Calu3 (cell line): ENCODE measurements at regions of chr7 and their contacts with region 1.

Region 1: GRCh38 chr7:38796626-38797501 is 112.1 kb downstream of the VPS41 start:
- DNase-seq: peak; percentile 79
- H3K4me3 Mint-ChIP-seq: no peak overlapping the region
- H3K27ac Mint-ChIP-seq: peak overlapping the region; percentile 25
- H3K4me1 Mint-ChIP-seq: peaks cover 30% of the 10 kb centered on the region
- H3K27me3 Mint-ChIP-seq: no peaks in the 10 kb centered on the region
- CTCF ChIP-seq: peak; percentile 83

Region 2: GRCh38 chr7:37942934-37943610 is 853.8 kb before region 1 on chr7:
- CTCF ChIA-PET with region 1: no interaction called
- intact Hi-C with region 1: no loop called
- DNase-seq: peak; percentile 67
- H3K4me3 Mint-ChIP-seq: peak overlapping the region; percentile 40
- H3K27ac Mint-ChIP-seq: peak overlapping the region; percentile 79
- H3K4me1 Mint-ChIP-seq: peaks cover 46% of the 10 kb centered on the region
- H3K27me3 Mint-ChIP-seq: no peaks in the 10 kb centered on the region
- CTCF ChIP-seq: no peak

Region 3: GRCh38 chr7:38007096-38007495 is 789.8 kb before region 1 on chr7:
- CTCF ChIA-PET with region 1: no interaction called
- intact Hi-C with region 1: no loop called
- DNase-seq: no peak
- H3K4me3 Mint-ChIP-seq: no peak overlapping the region
- H3K27ac Mint-ChIP-seq: no peak overlapping the region
- H3K4me1 Mint-ChIP-seq: no peaks in the 10 kb centered on the region
- H3K27me3 Mint-ChIP-seq: no peaks in the 10 kb centered on the region
- CTCF ChIP-seq: no peak

Region 4: GRCh38 chr7:38831259-38831996 is 34.6 kb after region 1 on chr7:
- CTCF ChIA-PET with region 1: no interaction called
- intact Hi-C with region 1: loop called (anchors 1 kb)
- DNase-seq: peak; percentile 15
- H3K4me3 Mint-ChIP-seq: peak overlapping the region; percentile 39
- H3K27ac Mint-ChIP-seq: peak overlapping the region; percentile 63
- H3K4me1 Mint-ChIP-seq: peaks cover 73% of the 10 kb centered on the region
- H3K27me3 Mint-ChIP-seq: no peaks in the 10 kb centered on the region
- CTCF ChIP-seq: no peak

Region 5: DNA sequence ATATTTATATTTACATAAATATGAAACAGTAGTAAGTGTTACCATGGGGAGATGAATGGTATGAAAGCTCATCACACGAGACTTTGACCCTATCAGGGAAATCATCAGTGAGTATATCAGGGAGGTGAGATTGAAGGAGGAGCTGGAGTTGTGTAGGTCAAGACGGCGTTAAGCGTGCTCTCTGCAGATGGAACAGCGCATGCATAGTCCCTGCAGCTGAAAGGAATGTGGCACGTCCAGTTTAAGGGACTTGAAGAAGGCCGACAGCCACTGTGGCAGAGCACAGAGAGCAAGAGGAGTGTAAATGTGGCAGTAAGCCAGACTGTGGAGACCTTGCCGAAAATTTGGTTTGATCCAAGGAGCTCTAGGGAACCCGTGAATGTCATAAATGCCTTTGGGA is 219.7 kb after region 1 on chr7:
- CTCF ChIA-PET with region 1: no interaction called
- intact Hi-C with region 1: loop called (anchors 5 kb)
- DNase-seq: peak; percentile 87
- H3K4me3 Mint-ChIP-seq: peak overlapping the region; percentile 61
- H3K27ac Mint-ChIP-seq: peak overlapping the region; percentile 61
- H3K4me1 Mint-ChIP-seq: peaks cover 25% of the 10 kb centered on the region
- H3K27me3 Mint-ChIP-seq: no peaks in the 10 kb centered on the region
- CTCF ChIP-seq: no peak

Region 6: GRCh38 chr7:39353615-39354376 is 556.9 kb after region 1 on chr7:
- CTCF ChIA-PET with region 1: no interaction called
- intact Hi-C with region 1: loop called (anchors 10 kb)
- DNase-seq: peak; percentile 77
- H3K4me3 Mint-ChIP-seq: peak overlapping the region; percentile 44
- H3K27ac Mint-ChIP-seq: peak overlapping the region; percentile 78
- H3K4me1 Mint-ChIP-seq: peaks cover 26% of the 10 kb centered on the region
- H3K27me3 Mint-ChIP-seq: no peaks in the 10 kb centered on the region
- CTCF ChIP-seq: peak; percentile 70

Region 7: GRCh38 chr7:39517240-39517639 is 720.4 kb after region 1 on chr7:
- CTCF ChIA-PET with region 1: no interaction called
- intact Hi-C with region 1: loop called (anchors 1 kb)
- DNase-seq: no peak
- H3K4me3 Mint-ChIP-seq: no peak overlapping the region
- H3K27ac Mint-ChIP-seq: no peak overlapping the region
- H3K4me1 Mint-ChIP-seq: no peaks in the 10 kb centered on the region
- H3K27me3 Mint-ChIP-seq: peaks cover 7% of the 10 kb centered on the region
- CTCF ChIP-seq: no peak